ENCODE measurements at regions of chr3 and their contacts with region 1.

Region 1: DNA sequence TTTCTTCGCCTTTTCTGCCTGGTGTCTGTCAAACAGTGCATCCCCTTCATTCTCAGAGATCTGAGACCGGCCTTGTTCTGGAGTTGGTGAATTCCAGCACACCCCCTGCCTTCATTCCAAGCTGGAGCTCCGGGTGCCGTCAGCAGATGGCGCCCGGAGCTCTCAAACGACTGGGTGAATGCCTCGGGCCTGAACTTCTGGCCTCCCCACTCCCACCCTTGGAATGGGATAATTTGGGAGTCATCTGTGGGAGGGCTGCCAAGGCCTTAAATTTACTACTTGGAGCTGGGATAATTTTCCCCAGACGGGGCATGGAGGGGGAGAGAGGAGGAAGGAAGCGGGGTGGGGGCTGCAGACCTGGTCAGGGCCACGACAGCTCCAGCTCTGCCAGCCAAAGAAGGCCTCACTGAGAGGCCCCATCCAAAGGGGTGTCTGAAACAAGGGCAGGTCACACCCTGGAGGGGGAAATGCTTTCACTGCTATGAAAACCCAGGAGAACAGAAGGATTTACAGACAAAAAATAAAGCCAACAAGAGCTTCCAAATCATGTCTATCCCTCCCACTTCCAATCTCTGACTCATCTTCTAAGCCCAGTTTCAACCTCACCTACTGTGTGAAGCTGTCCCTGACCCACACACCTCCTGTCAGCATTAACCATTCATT is 187.9 kb downstream of the OPA1 start:
- DNase-seq: no peak
- ATAC-seq: peak; percentile 42
- H3K4me3 Mint-ChIP-seq: no peak overlapping the region
- H3K27ac Mint-ChIP-seq: no peak overlapping the region
- H3K4me1 Mint-ChIP-seq: peaks cover 13% of the 10 kb centered on the region
- H3K27me3 Mint-ChIP-seq: peaks cover 34% of the 10 kb centered on the region
- CTCF ChIP-seq: no peak

Region 2: DNA sequence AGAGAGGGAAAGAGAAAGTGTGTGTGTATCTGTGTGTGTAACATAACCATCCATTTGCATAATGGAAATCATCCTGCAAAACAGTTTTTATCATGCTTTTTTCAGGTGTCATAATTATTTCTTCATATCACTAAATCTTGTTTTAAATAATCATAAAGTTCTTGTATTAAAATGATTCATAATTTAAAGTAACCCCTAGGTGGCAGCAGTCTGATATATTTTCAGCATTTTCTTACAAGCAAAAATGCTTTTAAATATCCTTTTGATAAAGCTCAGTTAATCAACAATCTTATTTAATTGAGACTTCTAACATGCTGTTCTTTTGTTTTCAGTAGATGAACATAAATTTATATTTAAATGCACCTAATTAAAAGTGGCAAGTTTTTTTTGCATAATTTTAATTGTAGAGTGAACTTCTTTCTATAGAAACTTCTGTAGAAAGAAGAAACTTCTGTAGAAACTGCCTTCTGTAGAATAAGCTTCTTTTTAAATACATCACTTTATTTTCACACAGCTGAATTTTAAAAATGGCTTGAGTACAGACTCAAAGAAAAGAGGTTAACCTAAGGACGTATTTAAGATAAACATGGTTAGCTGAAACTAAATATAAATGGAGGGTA is 115.5 kb before region 1 on chr3:
- CTCF ChIA-PET with region 1: interaction called, 21 read pairs
- POLR2A ChIA-PET with region 1: interaction called, 4 read pairs
- intact Hi-C with region 1: loop called (anchors 2 kb)
- DNase-seq: no peak
- ATAC-seq: no peak
- H3K4me3 Mint-ChIP-seq: no peak overlapping the region
- H3K27ac Mint-ChIP-seq: no peak overlapping the region
- H3K4me1 Mint-ChIP-seq: peaks cover 6% of the 10 kb centered on the region
- H3K27me3 Mint-ChIP-seq: no peaks in the 10 kb centered on the region
- CTCF ChIP-seq: peak; percentile 95

Region 3: GRCh38 chr3:194141415-194142155 is 360.6 kb after region 1 on chr3:
- CTCF ChIA-PET with region 1: interaction called, 62 read pairs
- POLR2A ChIA-PET with region 1: interaction called, 9 read pairs
- intact Hi-C with region 1: loop called (anchors 1 kb)
- DNase-seq: peak; percentile 50
- ATAC-seq: peak; percentile 27
- H3K4me3 Mint-ChIP-seq: peak overlapping the region; percentile 76
- H3K27ac Mint-ChIP-seq: peak overlapping the region; percentile 57
- H3K4me1 Mint-ChIP-seq: peaks cover 44% of the 10 kb centered on the region
- H3K27me3 Mint-ChIP-seq: peaks cover 6% of the 10 kb centered on the region
- CTCF ChIP-seq: no peak